Posterior vena cava (tissue), 2 donors: ENCODE measurements at regions of chr2 and their contacts with region 1.

Region 1: DNA sequence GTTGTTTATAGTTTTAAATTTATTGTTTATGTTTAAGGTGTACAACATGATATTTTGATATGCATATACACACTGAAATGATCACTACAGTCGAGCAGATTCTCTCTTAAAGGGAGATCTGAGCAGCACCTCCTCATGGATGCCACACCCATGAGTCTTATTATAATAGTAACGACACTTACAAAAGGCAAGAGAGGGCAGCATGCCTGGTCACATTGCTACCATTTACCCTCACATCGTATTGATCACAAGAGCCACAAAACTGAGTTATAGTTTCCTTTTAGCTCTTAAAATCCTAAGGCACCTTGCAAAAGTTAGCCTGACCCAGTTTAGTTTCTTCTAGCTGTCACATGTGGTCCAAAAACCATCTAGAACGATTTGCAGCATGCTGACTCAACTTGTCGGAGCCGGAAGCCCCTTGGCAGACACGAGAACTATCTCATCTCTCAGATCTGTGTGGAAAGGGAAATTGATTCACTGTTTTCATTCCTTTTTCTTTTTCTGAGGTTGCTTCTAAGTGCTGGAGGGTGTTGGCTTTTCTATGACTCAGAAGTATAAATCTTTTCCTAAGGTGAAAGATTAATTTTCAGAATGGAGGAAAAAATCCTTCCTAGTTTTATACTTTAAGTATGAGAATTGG is 85.3 kb downstream of the CDC42EP3 start:
- DNase-seq: peak; percentile 88

Region 2: GRCh38 chr2:37635504-37636380 is 49.6 kb after region 1 on chr2:
- intact Hi-C with region 1: loop called in 1 of 2 experiments (anchors 2 kb)
- DNase-seq: no peak